Mammary epithelial cell (primary cell): ENCODE measurements at regions of chr17 and their contacts with region 1.

Region 1: GRCh38 chr17:8173056-8173870 is 2.9 kb downstream of the TMEM107 start:
- DNase-seq: peak; percentile 99
- H3K4me3 ChIP-seq: peak overlapping the region; percentile 38 to 53 (median 48)
- H3K27ac ChIP-seq: peak overlapping the region; percentile 100
- H3K4me1 ChIP-seq: peaks cover 25% of the 10 kb centered on the region
- H3K27me3 ChIP-seq: no peaks in the 10 kb centered on the region
- CTCF ChIP-seq: no peak

Region 2: GRCh38 chr17:8125157-8125946 is 47.9 kb before region 1 on chr17:
- CTCF ChIA-PET with region 1: no interaction called
- dilution Hi-C with region 1: no loop called
- in situ Hi-C with region 1: no loop called
- intact Hi-C with region 1: loop called (anchors 1 kb)
- DNase-seq: peak; percentile 62
- H3K4me3 ChIP-seq: peak overlapping the region; percentile 61 to 75 (median 74)
- H3K27ac ChIP-seq: no peak overlapping the region
- H3K4me1 ChIP-seq: peaks cover 43% of the 10 kb centered on the region
- H3K27me3 ChIP-seq: no peaks in the 10 kb centered on the region
- CTCF ChIP-seq: no peak

Region 3: DNA sequence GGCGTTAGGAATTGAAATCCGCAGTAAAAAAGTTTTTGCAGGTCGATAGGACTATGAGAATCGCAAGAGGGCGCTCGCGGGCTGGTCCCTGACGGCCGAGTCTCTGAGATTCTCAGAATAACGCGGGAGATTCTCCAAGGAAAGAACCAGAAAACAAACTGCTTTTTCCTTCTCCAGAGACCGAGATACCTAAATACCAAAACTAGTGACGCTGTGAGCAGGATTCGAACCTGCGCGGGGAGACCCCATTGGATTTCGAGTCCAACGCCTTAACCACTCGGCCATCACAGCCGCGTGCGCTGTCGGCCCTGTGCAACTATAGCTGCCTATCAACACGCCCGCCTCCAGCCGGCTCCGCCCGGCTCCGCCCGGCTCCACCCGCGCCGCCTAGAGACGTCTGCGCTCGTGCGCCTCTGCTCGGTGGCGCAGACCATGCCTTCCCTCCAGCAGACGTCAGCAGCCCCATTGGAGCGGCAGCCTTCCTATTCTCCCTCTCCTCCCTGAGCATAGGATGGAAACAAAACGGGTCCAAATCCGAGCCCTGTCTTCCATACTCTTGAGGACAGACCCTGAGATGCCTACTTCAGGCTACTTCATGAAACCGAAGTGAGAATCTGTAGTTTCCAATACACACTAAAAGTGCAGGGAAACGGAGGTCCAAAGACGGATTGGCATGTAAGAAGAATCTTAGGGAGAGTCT is 34.4 kb before region 1 on chr17:
- CTCF ChIA-PET with region 1: interaction called, 3 read pairs
- dilution Hi-C with region 1: no loop called
- in situ Hi-C with region 1: no loop called
- intact Hi-C with region 1: loop called (anchors 1 kb)
- DNase-seq: peak; percentile 96
- H3K4me3 ChIP-seq: peak overlapping the region; percentile 10 to 44 (median 29)
- H3K27ac ChIP-seq: peak overlapping the region; percentile 61
- H3K4me1 ChIP-seq: peaks cover 18% of the 10 kb centered on the region
- H3K27me3 ChIP-seq: no peaks in the 10 kb centered on the region
- CTCF ChIP-seq: peak; percentile 83 to 89